Mammary epithelial cell (primary cell): ENCODE measurements at regions of chr5 and their contacts with region 1.

Region 1: DNA sequence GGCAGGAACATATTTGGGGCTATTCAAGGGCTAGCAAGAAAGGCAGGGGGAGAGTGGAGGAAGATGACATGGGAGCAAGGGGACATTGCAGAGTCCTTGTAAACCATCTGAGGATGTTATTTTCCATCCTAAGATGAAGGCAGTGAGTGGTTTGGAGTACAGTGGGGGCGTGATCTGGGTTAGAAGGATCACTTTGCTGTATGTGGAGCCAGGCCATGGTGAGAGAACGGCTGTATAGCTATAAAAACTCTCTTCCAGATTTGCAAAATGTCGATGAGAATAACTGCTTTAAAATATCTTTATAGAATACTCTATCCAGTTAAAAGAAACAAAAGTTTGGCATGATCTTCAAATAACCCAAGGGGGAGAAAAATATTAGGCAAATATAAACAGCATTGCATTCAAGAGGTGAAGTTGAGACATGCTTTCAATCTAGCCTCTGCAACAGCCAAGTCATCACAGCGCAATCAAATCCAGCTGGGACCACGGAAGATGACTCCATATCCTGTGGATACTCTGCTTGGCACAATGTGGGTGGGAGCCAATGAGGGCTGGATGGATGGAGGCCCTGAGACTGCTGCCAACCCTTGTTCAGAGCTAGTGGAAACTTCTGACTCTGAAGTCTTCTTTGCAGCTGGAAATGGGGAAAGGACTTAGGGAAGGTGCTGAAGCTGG is 111.5 kb upstream of the BASP1 start:
- DNase-seq: peak; percentile 75
- H3K4me3 ChIP-seq: no peak overlapping the region
- H3K27ac ChIP-seq: peak overlapping the region; percentile 3
- H3K4me1 ChIP-seq: peaks cover 14% of the 10 kb centered on the region
- H3K27me3 ChIP-seq: no peaks in the 10 kb centered on the region
- CTCF ChIP-seq: no peak

Region 2: GRCh38 chr5:16759147-16759773 is 346.6 kb before region 1 on chr5:
- CTCF ChIA-PET with region 1: no interaction called
- dilution Hi-C with region 1: no loop called
- in situ Hi-C with region 1: no loop called
- intact Hi-C with region 1: no loop called
- DNase-seq: no peak
- H3K4me3 ChIP-seq: no peak overlapping the region
- H3K27ac ChIP-seq: no peak overlapping the region
- H3K4me1 ChIP-seq: no peaks in the 10 kb centered on the region
- H3K27me3 ChIP-seq: no peaks in the 10 kb centered on the region
- CTCF ChIP-seq: no peak

Region 3: DNA sequence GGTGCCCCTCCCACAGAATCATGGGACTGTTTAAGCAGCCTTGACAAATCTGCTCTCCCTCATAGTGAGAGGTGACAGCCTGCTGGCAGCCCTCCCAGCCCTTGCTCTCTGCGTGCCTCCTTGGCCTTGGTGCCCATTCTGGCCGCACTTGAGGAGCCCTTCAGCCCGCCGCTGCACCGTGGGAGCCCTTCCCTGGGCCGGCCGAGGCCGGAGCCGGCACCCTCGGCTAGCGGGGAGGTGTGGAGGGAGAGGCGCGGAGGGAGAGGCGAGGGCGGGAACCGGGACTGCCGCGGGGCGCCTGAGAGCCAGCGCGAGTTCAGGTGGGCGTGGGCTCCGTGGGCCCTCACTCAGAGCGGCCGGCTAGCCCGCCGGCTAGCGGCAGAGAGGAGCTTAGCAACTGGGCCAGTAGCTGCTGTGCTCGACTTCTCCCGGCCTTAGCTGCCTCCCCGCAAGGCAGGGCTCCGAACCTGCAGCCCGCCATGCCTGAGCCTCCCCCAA is 43.9 kb before region 1 on chr5:
- CTCF ChIA-PET with region 1: interaction called, 14 read pairs
- dilution Hi-C with region 1: no loop called
- in situ Hi-C with region 1: no loop called
- intact Hi-C with region 1: no loop called
- DNase-seq: no peak
- H3K4me3 ChIP-seq: no peak overlapping the region
- H3K27ac ChIP-seq: no peak overlapping the region
- H3K4me1 ChIP-seq: no peaks in the 10 kb centered on the region
- H3K27me3 ChIP-seq: no peaks in the 10 kb centered on the region
- CTCF ChIP-seq: no peak